ENCODE measurements at regions of chr3 and their contacts with region 1.

Region 1: GRCh38 chr3:21484057-21484827 is 266.8 kb downstream of the ZNF385D start:
- DNase-seq: peak; percentile 40 to 57 (median 49)
- H3K4me3 ChIP-seq: no peak overlapping the region
- H3K27ac ChIP-seq: no peak overlapping the region
- H3K4me1 ChIP-seq: no peaks in the 10 kb centered on the region
- H3K27me3 ChIP-seq: no peaks in the 10 kb centered on the region
- CTCF ChIP-seq: peak in 1 of 3 donors; percentile 11
- EP300 ChIP-seq: no peak
- POLR2A ChIP-seq: no peak

Region 2: DNA sequence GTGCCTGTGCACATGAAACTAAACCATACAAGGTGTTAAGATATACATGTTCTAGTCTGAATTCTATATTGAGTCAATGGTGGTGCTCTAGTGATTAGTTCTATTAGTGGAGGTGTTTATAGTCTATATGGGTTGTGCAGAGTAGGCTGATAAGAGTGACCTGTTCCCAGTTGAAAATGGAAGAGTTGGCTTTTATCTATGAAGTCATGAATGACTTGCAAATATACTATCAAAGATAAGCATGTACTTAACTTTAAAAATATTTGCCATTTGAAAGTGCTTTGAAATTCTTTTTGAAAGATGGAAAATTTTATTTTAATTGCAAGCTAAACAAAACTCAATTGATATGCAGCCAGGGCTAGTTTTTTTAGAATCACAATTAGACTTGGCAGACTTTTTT is 1147.7 kb before region 1 on chr3:
- intact Hi-C with region 1: loop called in 1 of 4 experiments (anchors 10 kb)
- DNase-seq: no peak
- H3K4me3 ChIP-seq: no peak overlapping the region
- H3K27ac ChIP-seq: no peak overlapping the region
- H3K4me1 ChIP-seq: no peaks in the 10 kb centered on the region
- H3K27me3 ChIP-seq: no peaks in the 10 kb centered on the region
- CTCF ChIP-seq: no peak
- EP300 ChIP-seq: no peak
- POLR2A ChIP-seq: no peak

Region 3: GRCh38 chr3:20798666-20799065 is 685.6 kb before region 1 on chr3:
- intact Hi-C with region 1: loop called in 1 of 4 experiments (anchors 5 kb)
- DNase-seq: no peak
- H3K4me3 ChIP-seq: no peak overlapping the region
- H3K27ac ChIP-seq: no peak overlapping the region
- H3K4me1 ChIP-seq: no peaks in the 10 kb centered on the region
- H3K27me3 ChIP-seq: no peaks in the 10 kb centered on the region
- CTCF ChIP-seq: no peak
- EP300 ChIP-seq: no peak
- POLR2A ChIP-seq: no peak

Region 4: GRCh38 chr3:21509731-21510470 is 25.7 kb after region 1 on chr3:
- intact Hi-C with region 1: no loop called
- DNase-seq: no peak
- H3K4me3 ChIP-seq: no peak overlapping the region
- H3K27ac ChIP-seq: no peak overlapping the region
- H3K4me1 ChIP-seq: no peaks in the 10 kb centered on the region
- H3K27me3 ChIP-seq: no peaks in the 10 kb centered on the region
- CTCF ChIP-seq: no peak
- EP300 ChIP-seq: no peak
- POLR2A ChIP-seq: no peak

Region 5: DNA sequence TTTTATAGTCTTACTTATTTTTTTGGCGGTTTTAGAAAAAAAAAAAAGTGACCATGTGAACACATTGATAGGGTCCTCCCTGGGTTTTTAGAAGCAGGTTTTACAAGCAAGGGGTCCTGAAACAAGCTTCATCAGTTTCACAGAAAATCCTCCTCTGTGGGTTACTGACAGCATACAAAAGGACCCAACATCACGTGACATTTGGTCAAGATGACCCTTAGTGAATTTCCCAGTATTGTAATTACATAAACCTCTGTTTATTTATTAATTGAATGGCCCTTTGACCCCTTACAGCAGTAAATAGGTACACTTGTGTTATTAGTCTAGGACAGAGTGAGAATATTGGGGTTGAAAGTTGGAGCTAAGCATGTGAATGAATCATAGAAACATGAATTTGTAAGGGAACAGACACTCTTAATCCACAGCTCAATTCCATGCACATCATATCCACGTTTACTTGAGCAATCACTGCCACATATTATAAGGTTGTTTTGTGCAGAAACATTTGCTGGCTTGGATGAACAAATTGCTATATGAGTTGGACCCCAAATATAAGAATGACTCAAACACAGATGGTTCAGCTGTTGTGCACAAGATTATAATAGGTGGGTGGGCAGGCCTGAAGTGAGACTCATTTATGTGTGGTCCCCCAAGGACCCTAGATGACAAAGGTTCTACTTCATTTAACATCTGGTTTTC is 129.3 kb after region 1 on chr3:
- intact Hi-C with region 1: no loop called
- DNase-seq: no peak
- H3K4me3 ChIP-seq: no peak overlapping the region
- H3K27ac ChIP-seq: no peak overlapping the region
- H3K4me1 ChIP-seq: no peaks in the 10 kb centered on the region
- H3K27me3 ChIP-seq: no peaks in the 10 kb centered on the region
- CTCF ChIP-seq: no peak
- EP300 ChIP-seq: no peak
- POLR2A ChIP-seq: no peak

Region 6: GRCh38 chr3:21718161-21718765 is 234.0 kb after region 1 on chr3:
- intact Hi-C with region 1: no loop called
- DNase-seq: no peak
- H3K4me3 ChIP-seq: no peak overlapping the region
- H3K27ac ChIP-seq: no peak overlapping the region
- H3K4me1 ChIP-seq: no peaks in the 10 kb centered on the region
- H3K27me3 ChIP-seq: no peaks in the 10 kb centered on the region
- CTCF ChIP-seq: no peak
- EP300 ChIP-seq: no peak
- POLR2A ChIP-seq: no peak

Measured in ovary (tissue), 10 donors.